Natural killer cell (primary cell): ENCODE measurements at regions of chr3 and their contacts with region 1.

Region 1: GRCh38 chr3:140499114-140499757 is 178.6 kb upstream of the TRIM42 start:
- DNase-seq: peak in 1 of 2 donors; percentile 9
- ATAC-seq: peak in 1 of 3 donors; percentile 53
- H3K4me3 ChIP-seq: no peak overlapping the region
- H3K4me3 Mint-ChIP-seq: no peak overlapping the region
- H3K27ac ChIP-seq: no peak overlapping the region
- H3K27ac Mint-ChIP-seq: no peak overlapping the region
- H3K4me1 ChIP-seq: no peaks in the 10 kb centered on the region
- H3K4me1 Mint-ChIP-seq: no peaks in the 10 kb centered on the region
- H3K27me3 ChIP-seq: no peaks in the 10 kb centered on the region
- H3K27me3 Mint-ChIP-seq: peaks cover 10 to 12% of the 10 kb centered on the region in 2 donors
- CTCF ChIP-seq: no peak

Region 2: GRCh38 chr3:140292684-140293083 is 206.6 kb before region 1 on chr3:
- intact Hi-C with region 1: loop called (anchors 10 kb)
- DNase-seq: no peak
- ATAC-seq: no peak
- H3K4me3 ChIP-seq: no peak overlapping the region
- H3K4me3 Mint-ChIP-seq: no peak overlapping the region
- H3K27ac ChIP-seq: no peak overlapping the region
- H3K27ac Mint-ChIP-seq: no peak overlapping the region
- H3K4me1 ChIP-seq: no peaks in the 10 kb centered on the region
- H3K4me1 Mint-ChIP-seq: no peaks in the 10 kb centered on the region
- H3K27me3 ChIP-seq: no peaks in the 10 kb centered on the region
- H3K27me3 Mint-ChIP-seq: peaks cover 15 to 17% of the 10 kb centered on the region in 2 donors
- CTCF ChIP-seq: no peak

Region 3: DNA sequence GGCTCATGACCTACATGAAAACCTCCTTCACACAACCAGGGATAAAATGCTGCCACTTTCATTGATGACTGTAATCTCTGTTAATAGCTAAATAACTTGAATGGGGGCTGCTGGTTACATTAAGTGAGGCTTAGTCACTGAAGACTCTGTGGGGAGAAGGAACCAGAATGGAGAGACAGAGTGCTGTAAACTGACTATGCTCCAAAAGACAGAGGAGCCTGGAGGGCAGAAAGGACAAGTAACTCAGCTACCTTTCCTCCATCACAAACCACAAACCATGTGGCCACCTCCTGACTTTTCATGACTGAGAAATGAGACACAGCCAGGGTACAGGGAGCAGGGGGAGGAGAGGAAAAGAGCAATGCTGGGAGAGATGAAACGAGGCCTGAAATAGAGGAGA is 81.5 kb after region 1 on chr3:
- intact Hi-C with region 1: no loop called
- DNase-seq: no peak
- ATAC-seq: no peak
- H3K4me3 ChIP-seq: no peak overlapping the region
- H3K4me3 Mint-ChIP-seq: no peak overlapping the region
- H3K27ac ChIP-seq: no peak overlapping the region
- H3K27ac Mint-ChIP-seq: no peak overlapping the region
- H3K4me1 ChIP-seq: no peaks in the 10 kb centered on the region
- H3K4me1 Mint-ChIP-seq: no peaks in the 10 kb centered on the region
- H3K27me3 ChIP-seq: no peaks in the 10 kb centered on the region
- H3K27me3 Mint-ChIP-seq: peaks cover 7 to 14% of the 10 kb centered on the region in 2 donors
- CTCF ChIP-seq: no peak

Region 4: DNA sequence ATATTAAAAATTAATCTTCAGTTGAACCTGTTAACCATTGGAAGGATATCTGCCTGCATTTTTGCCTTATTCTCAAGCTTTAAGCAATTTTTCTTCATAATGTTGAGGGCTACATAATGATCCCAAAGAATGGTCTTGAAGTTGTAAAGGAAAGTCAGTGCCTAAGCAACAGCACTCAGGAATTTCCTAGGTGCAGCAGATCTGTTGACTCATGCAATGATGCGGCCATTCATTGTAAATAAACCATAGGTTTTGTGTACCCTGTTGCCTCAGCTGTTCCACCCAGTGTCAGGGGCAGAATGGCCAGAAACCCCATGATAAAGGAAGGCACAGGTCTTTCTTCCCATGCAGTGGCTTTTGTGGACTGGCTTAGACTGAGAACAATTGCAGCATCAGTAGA is 100.3 kb after region 1 on chr3:
- intact Hi-C with region 1: no loop called
- DNase-seq: no peak
- ATAC-seq: no peak
- H3K4me3 ChIP-seq: no peak overlapping the region
- H3K4me3 Mint-ChIP-seq: no peak overlapping the region
- H3K27ac ChIP-seq: no peak overlapping the region
- H3K27ac Mint-ChIP-seq: no peak overlapping the region
- H3K4me1 ChIP-seq: no peaks in the 10 kb centered on the region
- H3K4me1 Mint-ChIP-seq: no peaks in the 10 kb centered on the region
- H3K27me3 ChIP-seq: no peaks in the 10 kb centered on the region
- H3K27me3 Mint-ChIP-seq: peaks cover 0 to 5% of the 10 kb centered on the region in 2 donors
- CTCF ChIP-seq: no peak